Activated naive CD4-positive, alpha-beta T cell treated with anti-CD3 and anti-CD28 coated beads for 36 hours (primary cell): ENCODE measurements at regions of chr1 and their contacts with region 1.

Region 1: GRCh38 chr1:117605774-117606648 is at the start of gene TENT5C:
- DNase-seq: peak; percentile 98
- H3K4me3 Mint-ChIP-seq: peak within 1 kb of the TSS; percentile 86
- H3K27ac Mint-ChIP-seq: peak within 1 kb of the TSS; percentile 78
- H3K4me1 Mint-ChIP-seq: peaks cover 22% of the 10 kb centered on the region
- H3K27me3 Mint-ChIP-seq: peaks cover 2% of the 10 kb centered on the region
- total RNA-seq, gene TENT5C: 10.7 to 11.2 TPM

Region 2: DNA sequence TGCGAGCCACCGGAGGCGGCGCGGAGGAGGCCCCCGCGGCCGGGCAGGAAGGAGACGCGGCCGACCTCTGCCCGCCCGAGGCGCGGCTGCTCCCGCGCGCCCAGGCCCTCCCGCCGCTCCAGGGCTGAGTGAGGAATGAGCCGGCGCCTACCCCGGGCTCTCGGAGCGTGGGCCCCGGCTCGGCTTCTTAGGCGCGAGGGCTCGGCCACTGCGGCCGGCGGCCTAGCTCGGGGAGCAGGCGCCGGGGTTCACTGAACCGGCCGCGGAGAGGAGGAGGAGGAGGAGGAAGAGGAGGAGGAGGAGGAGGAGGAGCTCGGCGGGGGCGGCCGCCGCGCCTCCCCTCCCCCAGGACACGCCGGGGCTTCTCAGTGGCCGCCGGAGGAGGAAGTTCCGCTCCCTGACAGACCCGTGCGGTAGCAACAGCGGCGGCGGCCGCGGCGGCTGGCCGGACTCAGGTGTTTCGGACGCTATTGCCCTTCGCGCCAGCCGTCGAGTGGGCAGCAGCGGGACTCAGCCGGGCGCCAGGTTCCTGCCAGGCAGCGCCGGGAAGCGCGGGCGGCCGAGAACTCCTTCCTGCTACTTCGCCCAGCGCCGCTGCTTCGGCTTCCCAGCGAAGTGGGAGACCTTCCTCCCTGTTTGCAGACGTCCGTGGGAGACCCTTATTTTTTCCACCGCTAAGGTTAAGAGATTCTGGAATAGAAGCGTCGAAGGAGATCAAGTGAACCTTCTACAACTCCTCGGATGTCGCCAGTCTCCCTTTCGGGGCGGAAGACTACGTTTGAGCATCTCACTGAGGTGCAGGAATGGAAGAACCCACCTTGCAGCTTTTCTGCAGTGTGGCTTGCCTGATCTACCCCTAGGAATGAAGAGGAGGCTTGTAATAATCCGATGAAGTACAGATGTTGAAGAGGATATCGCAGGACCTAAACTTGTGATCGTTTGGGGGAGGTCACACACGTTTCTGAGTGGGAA is 238.7 kb before region 1 on chr1 and contains the start of gene MAN1A2:
- CTCF ChIA-PET with region 1: no interaction called
- intact Hi-C with region 1: loop called (anchors 2 kb)
- DNase-seq: peak; percentile 76
- H3K4me3 Mint-ChIP-seq: peak within 1 kb of the TSS; percentile 94
- H3K27ac Mint-ChIP-seq: peak within 1 kb of the TSS; percentile 94
- H3K4me1 Mint-ChIP-seq: peaks cover 48% of the 10 kb centered on the region
- H3K27me3 Mint-ChIP-seq: no peaks in the 10 kb centered on the region
- total RNA-seq, gene MAN1A2: 14.6 to 17.4 TPM

Region 3: DNA sequence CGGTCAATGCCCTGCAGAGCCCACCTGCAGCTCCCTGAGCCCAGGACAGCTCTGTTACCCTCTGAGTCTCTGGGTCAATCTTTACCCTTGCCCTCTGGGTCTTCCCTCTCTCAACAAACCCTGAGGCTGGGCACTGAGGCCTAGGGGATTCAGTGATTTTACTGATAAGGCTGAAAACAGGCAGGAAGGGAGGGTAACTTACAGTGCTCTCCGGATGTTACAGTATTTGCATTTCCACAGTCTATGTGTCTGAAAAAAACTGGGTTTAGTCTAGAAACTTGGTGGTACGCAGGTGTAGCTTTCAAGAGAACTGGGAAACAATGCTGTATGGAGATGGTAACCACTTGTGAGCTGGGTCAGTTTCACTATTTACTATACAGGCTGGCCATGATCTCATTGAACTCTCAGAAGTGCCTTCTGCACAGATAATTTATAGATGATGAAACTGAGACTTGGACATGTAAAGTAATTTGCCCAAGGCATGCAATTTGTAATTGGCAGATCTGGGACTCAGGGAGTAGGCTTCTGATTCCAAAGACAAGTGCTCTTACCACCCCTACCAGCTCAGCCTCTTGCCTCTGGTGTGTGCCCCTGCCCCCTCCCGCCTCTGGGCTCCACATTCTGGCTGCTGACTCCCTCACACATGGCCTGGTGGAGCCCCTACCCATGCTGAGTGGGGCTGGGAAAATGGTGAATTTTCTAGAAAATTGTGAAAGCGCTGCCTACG is 48.6 kb after region 1 on chr1:
- CTCF ChIA-PET with region 1: interaction called, 6 read pairs
- intact Hi-C with region 1: loop called (anchors 1 kb)
- DNase-seq: no peak
- H3K4me3 Mint-ChIP-seq: no peak overlapping the region
- H3K27ac Mint-ChIP-seq: no peak overlapping the region
- H3K4me1 Mint-ChIP-seq: peaks cover 72% of the 10 kb centered on the region
- H3K27me3 Mint-ChIP-seq: peaks cover 11% of the 10 kb centered on the region

Region 4: DNA sequence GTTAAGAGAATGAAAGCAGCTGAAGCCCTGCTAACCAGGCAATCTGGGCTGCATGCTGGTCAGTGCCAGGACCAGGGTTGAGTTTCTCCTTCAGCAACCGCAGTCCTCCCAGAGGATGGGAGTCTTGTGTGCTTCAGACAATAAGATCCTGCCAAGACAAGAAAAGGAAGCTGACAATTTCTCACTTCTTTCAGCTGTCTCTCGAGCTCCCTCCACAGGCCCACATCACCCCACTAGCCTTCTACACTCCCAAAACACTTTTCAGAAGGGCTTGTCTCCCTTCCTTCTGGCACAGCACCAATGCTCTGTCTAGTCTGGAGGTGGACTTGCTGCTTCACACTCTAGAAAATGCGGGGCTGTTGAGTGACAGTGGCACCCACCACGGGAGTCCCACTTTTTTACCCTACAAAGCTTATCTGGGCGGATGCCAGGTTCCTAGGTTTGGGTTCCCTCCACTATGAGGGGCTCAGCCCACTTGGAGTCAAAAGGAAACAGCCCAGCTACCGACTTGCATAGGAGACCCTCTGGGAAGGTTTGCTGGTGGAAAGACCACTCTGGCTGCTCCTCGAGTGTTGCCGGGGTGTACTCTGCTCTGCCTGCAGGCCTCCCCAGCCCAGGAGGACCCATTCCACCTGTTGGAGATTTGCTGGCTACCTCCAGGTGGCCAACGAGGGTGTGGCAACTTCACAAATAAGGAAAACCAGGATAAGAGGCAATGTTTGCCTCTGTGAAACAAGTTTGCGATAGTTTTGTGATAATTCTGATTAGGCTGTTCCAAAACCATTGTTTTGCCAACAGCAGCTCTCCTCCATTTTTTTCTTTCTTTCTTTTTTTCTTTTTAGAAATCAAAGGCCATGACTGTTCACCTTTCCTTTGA is 68.7 kb after region 1 on chr1:
- CTCF ChIA-PET with region 1: interaction called, 11 read pairs
- intact Hi-C with region 1: loop called (anchors 1 kb)
- DNase-seq: peak; percentile 73
- H3K4me3 Mint-ChIP-seq: no peak overlapping the region
- H3K27ac Mint-ChIP-seq: peak overlapping the region; percentile 46
- H3K4me1 Mint-ChIP-seq: peaks cover 4% of the 10 kb centered on the region
- H3K27me3 Mint-ChIP-seq: peaks cover 11% of the 10 kb centered on the region

Region 5: DNA sequence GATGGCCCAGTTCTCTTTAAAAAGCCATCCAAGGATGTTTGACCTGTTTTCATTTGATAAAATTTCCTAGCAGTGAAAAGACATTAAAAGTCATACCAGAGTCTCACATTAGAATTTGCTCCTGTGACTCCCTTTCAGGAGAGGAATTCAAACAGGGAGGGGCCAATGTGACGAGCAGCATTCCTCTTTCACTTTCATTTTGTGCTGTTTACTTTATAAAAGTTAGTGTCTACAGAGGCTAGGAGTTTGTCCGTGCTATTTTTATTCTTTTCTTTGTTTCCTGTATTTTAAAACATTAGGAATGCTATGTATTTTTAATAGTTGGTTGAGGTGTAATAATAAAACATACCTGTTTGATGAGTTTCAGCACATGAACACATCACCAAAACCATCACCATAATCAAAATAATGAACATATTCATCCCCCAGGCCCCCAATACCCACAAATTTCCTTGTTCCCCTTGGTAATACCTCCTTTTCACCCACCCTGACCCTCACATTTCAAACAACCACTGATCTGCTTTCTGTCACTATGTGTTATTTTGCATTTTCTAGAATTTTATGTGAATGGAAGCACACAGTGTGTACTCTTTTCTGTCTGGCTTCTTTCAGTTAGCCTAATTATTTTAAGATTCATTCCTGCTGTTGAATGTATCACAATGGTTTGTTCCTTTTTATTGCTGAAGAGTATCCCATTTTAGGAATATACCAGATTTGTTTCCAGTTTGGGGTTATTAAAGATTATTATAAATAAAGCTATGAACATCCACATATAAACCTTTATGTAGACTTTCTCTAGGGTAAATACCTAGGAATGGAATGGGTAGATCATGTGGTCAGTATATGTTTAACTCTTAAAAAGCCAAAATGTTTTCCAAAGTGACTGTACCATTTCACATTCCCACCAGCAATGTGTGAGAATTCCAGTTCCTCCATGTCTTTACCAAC is 129.3 kb after region 1 on chr1:
- CTCF ChIA-PET with region 1: no interaction called
- intact Hi-C with region 1: loop called (anchors 1 kb)
- DNase-seq: peak; percentile 58
- H3K4me3 Mint-ChIP-seq: peak overlapping the region; percentile 64
- H3K27ac Mint-ChIP-seq: peak overlapping the region; percentile 81
- H3K4me1 Mint-ChIP-seq: peaks cover 11% of the 10 kb centered on the region
- H3K27me3 Mint-ChIP-seq: no peaks in the 10 kb centered on the region

Region 6: DNA sequence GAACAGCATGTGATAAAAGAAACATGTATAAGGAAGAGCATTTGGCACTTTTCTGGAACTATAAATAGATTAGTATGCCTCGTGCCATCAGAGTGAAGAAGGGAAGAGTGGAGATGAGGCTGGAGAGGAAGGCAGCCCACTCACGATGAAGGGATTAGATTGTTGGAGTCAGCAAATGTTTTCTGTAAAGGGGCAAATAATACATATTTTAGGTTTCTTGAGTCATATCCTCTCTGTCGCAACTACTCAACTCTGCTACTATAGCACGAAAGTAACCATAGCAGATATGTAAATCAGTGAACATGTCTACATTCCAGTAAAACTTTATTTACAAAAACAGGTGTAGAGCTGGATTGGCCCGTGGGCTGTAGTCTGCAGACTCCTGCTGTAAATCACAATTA is 147.6 kb after region 1 on chr1:
- CTCF ChIA-PET with region 1: interaction called, 12 read pairs
- intact Hi-C with region 1: loop called (anchors 1 kb)
- DNase-seq: no peak
- H3K4me3 Mint-ChIP-seq: no peak overlapping the region
- H3K27ac Mint-ChIP-seq: no peak overlapping the region
- H3K4me1 Mint-ChIP-seq: peaks cover 13% of the 10 kb centered on the region
- H3K27me3 Mint-ChIP-seq: peaks cover 16% of the 10 kb centered on the region

Region 7: DNA sequence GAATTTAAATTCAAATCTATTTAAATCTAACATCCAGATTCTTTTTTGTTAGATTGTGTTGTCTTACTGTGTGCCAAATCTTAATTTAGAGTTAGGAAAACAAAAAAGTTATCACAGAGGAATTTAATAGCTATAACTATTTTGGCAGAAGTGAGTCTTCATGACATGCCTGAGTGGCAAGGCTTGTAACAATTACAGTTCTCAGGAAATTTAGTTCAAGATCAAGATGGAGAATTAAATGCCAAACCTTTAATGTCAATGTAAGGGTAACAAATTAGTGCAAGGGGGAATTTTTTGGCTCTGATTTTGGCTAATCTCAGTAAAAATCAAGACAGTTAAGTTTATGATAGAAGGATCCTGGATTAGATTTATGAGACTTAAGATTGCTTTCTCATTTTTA is 265.0 kb after region 1 on chr1:
- CTCF ChIA-PET with region 1: no interaction called
- intact Hi-C with region 1: no loop called
- DNase-seq: no peak
- H3K4me3 Mint-ChIP-seq: no peak overlapping the region
- H3K27ac Mint-ChIP-seq: no peak overlapping the region
- H3K4me1 Mint-ChIP-seq: no peaks in the 10 kb centered on the region
- H3K27me3 Mint-ChIP-seq: no peaks in the 10 kb centered on the region

Region 8: GRCh38 chr1:117929173-117929989 is 323.4 kb after region 1 on chr1 and contains the starts of genes GDAP2 and WDR3:
- CTCF ChIA-PET with region 1: no interaction called
- intact Hi-C with region 1: loop called (anchors 2 kb)
- DNase-seq: peak; percentile 97
- H3K4me3 Mint-ChIP-seq: peak within 1 kb of the TSS; percentile 96
- H3K27ac Mint-ChIP-seq: peak within 1 kb of the TSS; percentile 79
- H3K4me1 Mint-ChIP-seq: peaks cover 54% of the 10 kb centered on the region
- H3K27me3 Mint-ChIP-seq: no peaks in the 10 kb centered on the region
- total RNA-seq, gene GDAP2: 19.9 to 20.0 TPM
- total RNA-seq, gene WDR3: 45.2 to 49.6 TPM